ENCODE measurements at regions of chr3 and their contacts with region 1.

Region 1: GRCh38 chr3:148943506-148944205 is 47.7 kb upstream of the GYG1 start:
- DNase-seq: peak; percentile 28
- ATAC-seq: peak; percentile 99
- H3K4me3 Mint-ChIP-seq: no peak overlapping the region
- H3K27ac Mint-ChIP-seq: no peak overlapping the region
- H3K4me1 Mint-ChIP-seq: no peaks in the 10 kb centered on the region
- H3K27me3 Mint-ChIP-seq: peaks cover 2% of the 10 kb centered on the region

Region 2: DNA sequence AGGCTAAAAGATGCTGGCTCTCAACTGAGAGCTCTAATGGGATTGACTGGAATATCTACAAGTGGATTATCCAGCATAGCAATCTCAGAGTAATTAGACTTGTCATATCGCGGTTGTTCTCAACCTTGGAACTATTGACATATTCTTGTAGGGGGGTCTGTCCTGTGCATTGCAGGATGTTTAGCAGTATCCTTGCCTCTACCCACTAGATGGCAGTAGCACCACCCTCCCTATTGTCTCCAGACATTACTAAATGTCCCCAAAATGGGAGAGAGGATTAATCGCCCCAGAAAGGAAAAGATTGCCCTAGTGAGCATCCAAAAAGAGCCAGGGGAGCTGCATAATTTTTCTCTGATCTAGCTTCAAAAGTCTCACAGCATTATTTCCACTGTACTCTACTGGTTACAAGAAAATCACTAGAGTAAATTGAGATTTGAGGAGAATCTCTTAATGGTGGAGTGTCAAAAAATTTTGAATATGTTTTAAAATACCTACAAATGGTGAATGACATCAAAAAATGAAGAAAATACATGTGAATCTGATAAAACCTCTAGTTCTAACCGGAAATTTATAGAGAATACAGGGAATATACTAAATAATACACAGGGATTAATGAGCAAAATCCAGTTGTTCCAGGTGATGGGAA is 634.1 kb before region 1 on chr3:
- CTCF ChIA-PET with region 1: no interaction called
- POLR2A ChIA-PET with region 1: no interaction called
- intact Hi-C with region 1: loop called in 1 of 2 experiments (anchors 5 kb)
- DNase-seq: peak; percentile 24
- ATAC-seq: peak; percentile 36
- H3K4me3 Mint-ChIP-seq: no peak overlapping the region
- H3K27ac Mint-ChIP-seq: no peak overlapping the region
- H3K4me1 Mint-ChIP-seq: no peaks in the 10 kb centered on the region
- H3K27me3 Mint-ChIP-seq: no peaks in the 10 kb centered on the region

Region 3: GRCh38 chr3:148727247-148727646 is 216.4 kb before region 1 on chr3:
- CTCF ChIA-PET with region 1: no interaction called
- POLR2A ChIA-PET with region 1: no interaction called
- intact Hi-C with region 1: loop called in 1 of 2 experiments (anchors 5 kb)
- DNase-seq: peak; percentile 26
- ATAC-seq: peak; percentile 44
- H3K4me3 Mint-ChIP-seq: no peak overlapping the region
- H3K27ac Mint-ChIP-seq: no peak overlapping the region
- H3K4me1 Mint-ChIP-seq: no peaks in the 10 kb centered on the region
- H3K27me3 Mint-ChIP-seq: peaks cover 2% of the 10 kb centered on the region

Region 4: DNA sequence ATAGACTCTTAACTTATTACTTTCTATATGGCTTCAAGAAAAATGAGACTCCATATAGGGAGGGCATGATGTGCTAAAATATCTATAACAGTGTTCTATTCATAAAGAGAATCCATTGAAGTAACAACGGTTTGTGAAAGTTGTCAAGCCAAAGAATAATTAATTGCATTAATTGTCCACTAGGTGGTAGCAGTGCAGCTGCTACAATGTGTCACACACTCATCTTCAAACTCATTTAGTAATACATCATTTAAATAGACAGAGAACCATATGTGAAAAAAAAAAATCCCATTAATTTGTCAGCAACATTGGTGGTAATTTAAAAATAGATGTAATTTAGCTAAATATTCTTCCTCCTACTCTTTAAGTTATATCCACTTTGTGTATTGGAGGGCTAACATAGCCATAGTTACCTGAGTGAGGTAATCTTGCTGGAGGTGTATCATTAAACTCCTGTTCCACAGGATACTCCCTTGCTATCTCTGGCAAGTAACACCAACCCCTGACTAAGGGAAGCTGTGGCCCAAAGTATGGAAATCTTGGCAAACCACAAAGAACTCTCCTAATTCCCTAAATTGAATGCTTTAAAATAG is 82.3 kb before region 1 on chr3:
- CTCF ChIA-PET with region 1: interaction called, 69 read pairs
- POLR2A ChIA-PET with region 1: no interaction called
- intact Hi-C with region 1: loop called (anchors 1 kb)
- DNase-seq: no peak
- ATAC-seq: peak; percentile 60
- H3K4me3 Mint-ChIP-seq: no peak overlapping the region
- H3K27ac Mint-ChIP-seq: no peak overlapping the region
- H3K4me1 Mint-ChIP-seq: no peaks in the 10 kb centered on the region
- H3K27me3 Mint-ChIP-seq: peaks cover 10% of the 10 kb centered on the region

Region 5: GRCh38 chr3:148955544-148956346 is 12.1 kb after region 1 on chr3:
- CTCF ChIA-PET with region 1: interaction called, 10 read pairs
- POLR2A ChIA-PET with region 1: no interaction called
- intact Hi-C with region 1: no loop called
- DNase-seq: peak; percentile 42
- ATAC-seq: peak; percentile 23
- H3K4me3 Mint-ChIP-seq: no peak overlapping the region
- H3K27ac Mint-ChIP-seq: no peak overlapping the region
- H3K4me1 Mint-ChIP-seq: peaks cover 2% of the 10 kb centered on the region
- H3K27me3 Mint-ChIP-seq: no peaks in the 10 kb centered on the region